ENCODE measurements at regions of chr12 and their contacts with region 1.

Region 1: GRCh38 chr12:72017054-72017651 is 78.5 kb downstream of the TPH2 start:
- DNase-seq: peak; percentile 50 to 89
- H3K4me3 ChIP-seq: no peak overlapping the region
- H3K27ac ChIP-seq: no peak overlapping the region
- H3K4me1 ChIP-seq: no peaks in the 10 kb centered on the region
- H3K27me3 ChIP-seq: no peaks in the 10 kb centered on the region
- CTCF ChIP-seq: peak; percentile 67 to 89 (median 77)
- EP300 ChIP-seq: no peak
- POLR2A ChIP-seq: no peak
- RAD21 ChIP-seq: peak; percentile 92

Region 2: GRCh38 chr12:71981149-71981548 is 36.0 kb before region 1 on chr12:
- CTCF ChIA-PET with region 1: no interaction called
- POLR2A ChIA-PET with region 1: no interaction called
- DNase-seq: no peak
- H3K4me3 ChIP-seq: no peak overlapping the region
- H3K27ac ChIP-seq: no peak overlapping the region
- H3K4me1 ChIP-seq: peaks cover 0 to 8% (median 0%) of the 10 kb centered on the region in 4 experiments; a peak in 4 of 7 replicates
- H3K27me3 ChIP-seq: no peaks in the 10 kb centered on the region
- CTCF ChIP-seq: no peak
- EP300 ChIP-seq: no peak
- POLR2A ChIP-seq: no peak
- RAD21 ChIP-seq: no peak

Region 3: DNA sequence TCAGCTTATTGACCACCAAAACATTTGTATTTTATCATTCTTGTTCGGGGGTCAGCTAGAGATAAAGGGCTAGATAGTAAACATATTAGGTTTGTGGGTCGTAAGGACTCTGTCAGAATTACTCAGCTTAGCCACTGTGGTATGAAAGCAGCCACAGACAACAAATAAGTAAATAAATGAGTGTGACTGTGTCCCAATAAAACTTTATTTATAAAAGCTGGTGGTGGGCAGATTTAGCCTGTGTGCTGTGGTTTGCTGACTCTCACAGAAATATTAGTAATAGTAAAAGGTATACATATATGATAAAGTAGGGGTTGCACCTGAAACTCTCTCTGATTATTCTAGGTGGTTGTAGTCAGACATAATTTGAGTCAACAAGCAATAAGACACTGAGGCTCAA is 22.4 kb before region 1 on chr12:
- CTCF ChIA-PET with region 1: interaction called, 13 read pairs
- POLR2A ChIA-PET with region 1: no interaction called
- DNase-seq: no peak
- H3K4me3 ChIP-seq: no peak overlapping the region
- H3K27ac ChIP-seq: no peak overlapping the region
- H3K4me1 ChIP-seq: 0 out of 7 replicates have a peak, but pooled peaks cover 0 to 3% (median 0%) of the 10 kb centered on the region in 4 experiments
- H3K27me3 ChIP-seq: no peaks in the 10 kb centered on the region
- CTCF ChIP-seq: no peak
- EP300 ChIP-seq: no peak
- POLR2A ChIP-seq: no peak
- RAD21 ChIP-seq: no peak

Measured in H1 (cell line).